Right ventricle myocardium inferior (tissue), 1 donor: ENCODE measurements at regions of chr14 and their contacts with region 1.

Region 1: GRCh38 chr14:73851644-73852382 is at the start of gene PTGR2:
- DNase-seq: peak; percentile 96
- ATAC-seq: peak; percentile 99
- total RNA-seq, gene PTGR2: 32.8 TPM

Region 2: GRCh38 chr14:73886449-73887317 is 34.9 kb after region 1 on chr14 and contains the start of gene ZNF410:
- intact Hi-C with region 1: loop called (anchors 2 kb)
- DNase-seq: peak; percentile 98
- ATAC-seq: peak; percentile 100
- total RNA-seq, gene ZNF410: 16.0 TPM